ENCODE measurements at regions of chr13 and their contacts with region 1.

Region 1: GRCh38 chr13:97809576-97809975 is 143.9 kb upstream of the IPO5 start:
- DNase-seq: no peak
- ATAC-seq: no peak
- H3K4me3 ChIP-seq: no peak overlapping the region
- H3K27ac ChIP-seq: no peak overlapping the region
- H3K4me1 ChIP-seq: no peaks in the 10 kb centered on the region
- H3K27me3 ChIP-seq: no peaks in the 10 kb centered on the region

Region 2: DNA sequence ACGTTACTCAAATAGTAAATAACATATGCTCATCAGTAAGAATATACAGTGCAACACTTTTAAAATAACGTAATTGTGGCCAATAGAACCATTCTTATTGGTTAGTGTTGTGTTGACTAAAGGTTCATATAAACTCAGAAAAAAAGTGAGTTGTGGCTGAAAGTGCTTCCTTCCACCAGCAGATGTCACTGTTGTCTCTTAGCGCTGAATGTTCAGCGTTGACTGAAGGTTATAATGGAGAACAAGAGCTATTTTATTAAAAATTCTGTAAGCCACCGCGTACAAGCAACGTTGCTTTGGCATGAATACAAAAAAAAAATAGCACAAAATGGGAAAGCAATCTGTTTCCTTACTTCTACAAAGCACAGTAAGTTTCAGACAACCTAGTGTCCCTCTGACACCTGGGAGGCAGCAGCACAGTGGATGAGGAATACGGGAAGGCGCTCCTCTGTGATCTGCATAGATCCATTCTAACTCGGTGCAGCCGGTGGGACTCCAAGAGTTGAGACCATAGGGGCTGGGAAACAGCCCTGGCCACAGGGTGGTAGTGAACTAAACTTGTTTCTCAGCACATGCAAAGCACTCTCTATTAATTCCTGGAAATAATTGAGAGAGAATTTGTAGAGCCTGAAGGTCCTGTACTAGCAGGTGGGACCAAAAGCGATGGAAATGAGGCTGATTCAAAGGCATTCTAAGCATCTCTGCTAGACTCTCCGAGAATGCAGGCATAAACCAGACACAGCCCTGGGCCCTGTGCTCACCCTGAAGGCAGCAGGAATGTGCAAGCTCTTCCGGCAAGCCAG is 791.3 kb before region 1 on chr13:
- intact Hi-C with region 1: loop called (anchors 10 kb)
- DNase-seq: no peak
- ATAC-seq: peak; percentile 73
- H3K4me3 ChIP-seq: peak overlapping the region in 1 of 2 donors; percentile 11
- H3K27ac ChIP-seq: no peak overlapping the region
- H3K4me1 ChIP-seq: no peaks in the 10 kb centered on the region
- H3K27me3 ChIP-seq: no peaks in the 10 kb centered on the region

Region 3: DNA sequence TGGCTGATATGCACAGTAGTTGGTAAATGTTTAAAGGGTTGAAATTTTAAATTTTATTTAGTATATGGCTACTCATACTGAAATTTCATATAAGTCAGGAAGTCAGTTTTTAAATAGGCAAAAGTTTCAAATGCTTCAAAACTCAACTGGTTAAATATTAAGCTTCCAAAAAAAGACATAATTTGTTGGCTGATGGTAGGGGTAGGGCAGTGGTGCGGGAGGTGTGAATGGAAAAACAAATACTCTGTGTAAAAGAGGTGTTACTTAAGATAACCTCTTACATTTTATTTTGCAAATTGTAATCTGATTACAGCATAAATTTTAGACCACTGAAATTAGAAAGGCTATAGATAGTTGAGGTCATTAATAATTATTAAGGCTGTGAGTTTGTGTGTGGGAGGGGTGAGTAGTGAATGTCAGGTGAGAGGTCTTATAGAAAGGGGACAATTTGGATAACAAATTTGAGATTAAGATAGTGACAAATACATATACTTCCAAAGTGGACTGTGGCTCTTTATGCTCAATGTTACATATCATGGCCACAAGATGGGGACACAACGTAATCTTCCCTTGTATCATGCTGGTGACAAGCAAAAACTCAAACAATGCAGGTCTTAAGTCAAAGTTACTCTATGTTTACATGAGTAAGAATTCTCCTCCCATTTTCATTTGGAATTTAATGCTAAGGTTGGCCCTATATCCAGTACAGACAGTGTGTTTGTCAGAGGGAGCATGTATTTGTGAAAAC is 778.7 kb before region 1 on chr13:
- intact Hi-C with region 1: loop called in 1 of 2 experiments (anchors 10 kb)
- DNase-seq: no peak
- ATAC-seq: no peak
- H3K4me3 ChIP-seq: no peak overlapping the region
- H3K27ac ChIP-seq: no peak overlapping the region
- H3K4me1 ChIP-seq: peaks cover 2 to 3% of the 10 kb centered on the region in 2 donors
- H3K27me3 ChIP-seq: no peaks in the 10 kb centered on the region

Region 4: DNA sequence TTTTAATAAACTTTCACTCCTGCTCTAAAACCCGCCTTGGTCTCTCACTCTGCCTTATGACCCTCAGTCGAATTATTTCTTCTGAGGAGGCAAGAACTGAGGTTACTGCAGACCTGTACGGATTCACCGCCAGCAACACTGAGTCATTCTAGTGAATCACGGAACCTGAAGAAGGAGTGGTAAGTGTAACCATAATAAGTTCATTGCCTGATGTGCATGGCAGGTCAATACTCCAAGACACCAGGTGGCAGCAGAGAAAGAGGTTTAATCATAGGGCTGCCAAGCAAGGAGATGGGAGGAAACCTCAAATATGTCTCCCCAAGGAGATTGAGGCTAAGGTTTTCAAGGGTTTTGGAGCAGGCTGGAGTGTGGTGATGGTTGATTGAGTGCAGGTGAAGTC is 60.4 kb before region 1 on chr13:
- intact Hi-C with region 1: loop called in 1 of 2 experiments (anchors 10 kb)
- DNase-seq: no peak
- ATAC-seq: no peak
- H3K4me3 ChIP-seq: no peak overlapping the region
- H3K27ac ChIP-seq: no peak overlapping the region
- H3K4me1 ChIP-seq: no peaks in the 10 kb centered on the region
- H3K27me3 ChIP-seq: no peaks in the 10 kb centered on the region

Region 5: DNA sequence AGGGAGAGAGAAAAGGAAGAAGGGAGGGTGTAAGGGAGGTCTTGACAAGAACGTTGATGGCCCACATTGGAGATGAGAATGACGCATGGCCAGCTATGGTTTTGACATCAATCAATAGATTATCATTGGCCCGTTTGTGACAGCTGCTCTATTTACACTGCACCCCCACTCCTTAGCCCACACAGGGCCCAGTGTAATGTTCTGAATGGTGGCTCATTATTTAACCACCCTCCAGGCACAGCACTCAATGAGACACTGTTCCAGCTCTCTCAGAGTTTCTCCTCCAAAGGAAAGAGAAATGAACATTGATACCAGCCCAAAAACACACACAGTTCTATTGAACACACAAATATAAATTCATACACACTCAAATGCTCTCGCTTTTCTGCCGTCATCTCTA is 29.1 kb before region 1 on chr13:
- intact Hi-C with region 1: no loop called
- DNase-seq: no peak
- ATAC-seq: no peak
- H3K4me3 ChIP-seq: no peak overlapping the region
- H3K27ac ChIP-seq: peak overlapping the region; percentile 19 to 36
- H3K4me1 ChIP-seq: peaks cover 2 to 5% of the 10 kb centered on the region in 2 donors
- H3K27me3 ChIP-seq: no peaks in the 10 kb centered on the region